WTC11 (cell line): ENCODE measurements at regions of chr1 and their contacts with region 1.

Region 1: DNA sequence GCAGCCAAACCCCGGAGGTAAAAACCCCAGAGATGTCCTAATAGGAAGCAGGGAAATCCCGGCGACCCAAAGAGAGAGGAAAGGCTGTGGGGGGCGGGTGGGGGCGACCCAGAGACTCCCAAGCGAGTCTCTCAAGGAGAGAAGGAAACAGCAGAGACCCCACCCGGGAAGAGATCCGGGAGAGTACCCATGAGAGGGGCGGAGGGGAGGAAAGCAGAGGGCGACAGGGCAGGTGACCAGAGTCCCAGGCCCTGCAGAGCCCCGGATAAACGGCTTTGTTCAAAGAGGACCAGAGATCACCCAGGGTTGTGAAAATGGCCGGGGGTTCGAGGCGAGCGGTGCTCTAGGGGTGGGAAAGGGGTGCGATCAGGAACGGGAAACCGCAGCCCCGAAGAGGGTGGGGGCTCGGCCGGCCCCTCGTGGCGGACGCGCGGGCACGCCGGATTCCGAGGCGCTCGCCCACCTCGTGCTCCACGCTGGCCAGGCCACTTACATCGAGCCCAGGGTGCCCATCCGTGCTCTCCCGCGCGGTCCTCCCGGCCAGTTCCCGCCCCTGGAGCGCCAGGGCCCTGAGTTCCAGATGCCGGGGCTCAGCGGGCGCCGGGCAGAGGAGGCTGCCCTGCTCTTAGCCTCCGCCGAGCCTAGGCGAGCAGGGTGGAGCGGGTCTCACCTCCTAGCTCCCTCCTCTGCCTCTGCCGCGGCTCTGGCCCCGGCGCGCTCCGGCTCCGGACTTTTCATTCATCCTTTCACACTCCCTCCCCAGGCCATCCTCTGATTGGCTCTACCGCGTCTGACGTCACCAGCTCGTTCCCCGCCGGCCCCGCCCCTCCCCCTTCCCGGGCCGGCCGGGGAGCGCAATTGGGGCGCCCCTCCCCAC is 52.3 kb downstream of the RHBG start:
- DNase-seq: peak; percentile 93
- ATAC-seq: peak; percentile 88
- H3K4me3 Mint-ChIP-seq: peak overlapping the region; percentile 76
- H3K27ac Mint-ChIP-seq: no peak overlapping the region
- H3K4me1 Mint-ChIP-seq: peaks cover 34% of the 10 kb centered on the region
- H3K27me3 Mint-ChIP-seq: peaks cover 100% of the 10 kb centered on the region
- CTCF ChIP-seq: no peak

Region 2: DNA sequence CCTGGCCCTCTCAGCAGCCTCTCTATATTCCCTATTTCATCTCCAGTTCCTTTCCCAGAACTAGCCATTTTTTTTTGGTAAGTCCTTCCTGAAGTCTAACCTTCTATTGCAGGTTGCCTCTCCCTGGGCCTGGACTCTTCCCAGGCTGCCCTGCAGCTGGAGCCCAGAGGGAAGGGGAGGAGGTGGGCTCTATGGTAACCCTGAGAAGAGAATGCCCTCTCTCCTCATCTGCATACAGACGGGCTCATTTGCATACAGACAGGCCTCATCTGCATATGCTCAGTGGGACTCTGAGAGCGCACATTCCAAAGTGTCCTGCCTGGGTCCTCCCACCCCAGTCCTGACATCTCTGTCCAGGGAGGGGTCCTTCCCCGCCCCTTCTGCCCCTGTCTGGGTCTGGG is 19.6 kb before region 1 on chr1:
- CTCF ChIA-PET with region 1: interaction called, 12 read pairs
- POLR2A ChIA-PET with region 1: no interaction called
- DNase-seq: peak; percentile 67
- ATAC-seq: peak; percentile 96
- H3K4me3 Mint-ChIP-seq: no peak overlapping the region
- H3K27ac Mint-ChIP-seq: peak overlapping the region; percentile 89
- H3K4me1 Mint-ChIP-seq: peaks cover 34% of the 10 kb centered on the region
- H3K27me3 Mint-ChIP-seq: peaks cover 16% of the 10 kb centered on the region
- CTCF ChIP-seq: no peak

Region 3: GRCh38 chr1:156407344-156407743 is 14.0 kb before region 1 on chr1:
- CTCF ChIA-PET with region 1: interaction called, 12 read pairs
- POLR2A ChIA-PET with region 1: interaction called, 3 read pairs
- DNase-seq: no peak
- ATAC-seq: peak; percentile 72
- H3K4me3 Mint-ChIP-seq: no peak overlapping the region
- H3K27ac Mint-ChIP-seq: no peak overlapping the region
- H3K4me1 Mint-ChIP-seq: peaks cover 6% of the 10 kb centered on the region
- H3K27me3 Mint-ChIP-seq: peaks cover 8% of the 10 kb centered on the region; the same call in 1 of the 2 replicates
- CTCF ChIP-seq: no peak

Region 4: GRCh38 chr1:156435545-156436141 is 14.3 kb after region 1 on chr1:
- CTCF ChIA-PET with region 1: interaction called, 36 read pairs
- POLR2A ChIA-PET with region 1: interaction called, 10 read pairs
- DNase-seq: no peak
- ATAC-seq: no peak
- H3K4me3 Mint-ChIP-seq: peak overlapping the region; percentile 66
- H3K27ac Mint-ChIP-seq: no peak overlapping the region
- H3K4me1 Mint-ChIP-seq: peaks cover 71% of the 10 kb centered on the region
- H3K27me3 Mint-ChIP-seq: peaks cover 100% of the 10 kb centered on the region
- CTCF ChIP-seq: no peak